ENCODE measurements at regions of chr9 and their contacts with region 1.

Region 1: GRCh38 chr9:104968025-104968982 is 40.3 kb upstream of the ABCA1 start:
- DNase-seq: peak; percentile 91
- ATAC-seq: peak; percentile 99
- H3K4me3 Mint-ChIP-seq: peak overlapping the region; percentile 94
- H3K27ac Mint-ChIP-seq: peak overlapping the region; percentile 20
- H3K4me1 Mint-ChIP-seq: peaks cover 10% of the 10 kb centered on the region
- H3K27me3 Mint-ChIP-seq: peaks cover 15% of the 10 kb centered on the region
- CTCF ChIP-seq: no peak

Region 2: GRCh38 chr9:104765138-104765537 is 203.2 kb before region 1 on chr9:
- CTCF ChIA-PET with region 1: no interaction called
- POLR2A ChIA-PET with region 1: no interaction called
- intact Hi-C with region 1: loop called (anchors 5 kb)
- DNase-seq: no peak
- ATAC-seq: peak; percentile 8
- H3K4me3 Mint-ChIP-seq: peak overlapping the region; percentile 90
- H3K27ac Mint-ChIP-seq: peak overlapping the region; percentile 90
- H3K4me1 Mint-ChIP-seq: peaks cover 44% of the 10 kb centered on the region
- H3K27me3 Mint-ChIP-seq: no peaks in the 10 kb centered on the region
- CTCF ChIP-seq: no peak

Region 3: DNA sequence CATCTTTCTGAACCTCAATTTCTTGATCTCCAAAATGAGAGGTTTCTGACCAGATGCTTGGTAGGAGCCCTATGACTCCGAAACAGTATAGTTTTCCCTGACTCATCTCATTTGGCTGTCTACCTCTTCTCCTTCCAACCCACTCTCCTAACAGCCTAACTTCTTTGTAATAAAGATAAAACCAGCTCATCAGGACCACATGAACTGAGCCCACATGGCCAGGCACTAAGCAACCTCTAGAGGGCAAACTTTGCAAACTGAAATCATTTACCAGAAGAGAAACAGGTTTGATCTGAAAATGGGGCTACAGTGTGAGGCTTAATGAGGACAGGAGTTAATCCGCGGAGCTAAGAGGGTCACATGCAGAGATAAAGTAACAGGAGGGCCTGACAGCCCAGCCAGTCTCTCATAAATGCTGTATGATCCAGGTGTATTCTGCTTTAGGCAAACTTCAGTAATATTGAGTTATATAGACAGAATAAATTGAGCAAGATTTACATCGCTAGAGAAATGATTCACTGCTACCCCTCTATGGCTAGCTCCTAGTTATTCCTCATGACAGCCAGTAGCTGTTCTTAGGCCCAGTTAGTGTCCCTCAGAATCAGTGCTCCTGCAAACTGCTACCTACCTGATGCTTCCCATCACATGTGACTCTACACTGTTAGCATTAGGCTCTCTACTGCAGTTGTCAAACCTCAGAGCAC is 105.0 kb before region 1 on chr9:
- CTCF ChIA-PET with region 1: interaction called, 3 read pairs
- POLR2A ChIA-PET with region 1: no interaction called
- intact Hi-C with region 1: loop called (anchors 2 kb)
- DNase-seq: no peak
- ATAC-seq: peak; percentile 74
- H3K4me3 Mint-ChIP-seq: no peak overlapping the region
- H3K27ac Mint-ChIP-seq: no peak overlapping the region
- H3K4me1 Mint-ChIP-seq: peaks cover 53% of the 10 kb centered on the region
- H3K27me3 Mint-ChIP-seq: no peaks in the 10 kb centered on the region
- CTCF ChIP-seq: no peak

Region 4: DNA sequence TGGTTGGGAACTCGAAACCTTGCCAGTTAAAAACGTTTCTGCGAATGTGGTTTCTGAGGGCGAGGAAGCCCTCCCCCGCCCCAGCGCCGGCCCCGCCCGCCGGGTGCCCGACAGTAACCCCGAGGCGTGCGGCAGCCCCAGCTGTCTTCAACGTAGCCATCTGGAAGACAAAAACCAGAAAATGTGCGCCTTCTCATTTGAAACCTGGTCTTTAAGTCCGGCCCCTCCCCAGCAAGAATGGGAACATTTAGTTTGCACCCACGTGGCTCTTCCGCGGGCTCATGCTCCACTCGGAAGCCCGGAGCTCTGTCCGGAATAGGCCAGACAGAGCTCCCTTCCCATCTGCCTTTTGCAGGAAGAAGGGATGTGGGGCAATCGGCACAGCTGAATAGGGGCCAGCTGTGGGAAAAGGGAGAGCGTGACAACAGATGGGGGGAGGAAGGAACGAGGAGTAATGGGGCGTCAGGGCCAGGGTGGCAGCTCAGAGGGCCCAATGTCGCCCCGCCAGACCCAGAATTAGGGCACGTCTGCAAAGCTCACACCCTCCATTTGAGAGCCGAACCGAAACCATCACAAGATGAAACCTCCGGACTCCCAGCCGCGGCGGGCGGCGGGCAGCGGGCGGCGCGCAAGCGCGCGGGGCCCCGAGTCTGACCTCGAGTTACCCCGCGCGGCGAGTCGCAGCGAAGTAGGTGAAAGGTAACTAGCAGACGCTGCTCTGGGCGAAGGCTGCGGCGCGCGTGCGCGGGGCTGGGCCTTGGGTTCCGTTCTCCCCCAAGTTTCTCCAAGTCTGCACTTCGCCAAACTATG is 23.0 kb after region 1 on chr9:
- CTCF ChIA-PET with region 1: interaction called, 4 read pairs
- POLR2A ChIA-PET with region 1: interaction called, 4 read pairs
- intact Hi-C with region 1: loop called (anchors 1 kb)
- DNase-seq: peak; percentile 69
- ATAC-seq: peak; percentile 80
- H3K4me3 Mint-ChIP-seq: peak overlapping the region; percentile 86
- H3K27ac Mint-ChIP-seq: peak overlapping the region; percentile 69
- H3K4me1 Mint-ChIP-seq: peaks cover 33% of the 10 kb centered on the region
- H3K27me3 Mint-ChIP-seq: peaks cover 2% of the 10 kb centered on the region
- CTCF ChIP-seq: no peak

Measured in activated B cell treated with CpG ODN at 0.5 μM for 24 hours (primary cell).